ENCODE measurements at regions of chr3 and their contacts with region 1.

Region 1: GRCh38 chr3:139389458-139390209 is at the start of gene COPB2:
- DNase-seq: peak; percentile 98
- ATAC-seq: peak; percentile 97
- H3K4me3 ChIP-seq: peak within 1 kb of the TSS; percentile 73 to 96 (median 79)
- H3K4me3 Mint-ChIP-seq: peak within 1 kb of the TSS; percentile 96
- H3K27ac ChIP-seq: peak within 1 kb of the TSS; percentile 86 to 94
- H3K27ac Mint-ChIP-seq: peak within 1 kb of the TSS; percentile 95
- H3K4me1 ChIP-seq: peaks cover 16 to 21% of the 10 kb centered on the region in 2 donors
- H3K4me1 Mint-ChIP-seq: peaks cover 39% of the 10 kb centered on the region
- H3K27me3 ChIP-seq: no peaks in the 10 kb centered on the region
- H3K27me3 Mint-ChIP-seq: no peaks in the 10 kb centered on the region
- CTCF ChIP-seq: no peak
- total RNA-seq, gene COPB2: 75.4 and 81.7 TPM in 2 replicates

Region 2: GRCh38 chr3:138174421-138175122 is 1215.1 kb before region 1 on chr3 and contains the start of gene DBR1:
- CTCF ChIA-PET with region 1: no interaction called
- POLR2A ChIA-PET with region 1: no interaction called
- intact Hi-C with region 1: loop called (anchors 5 kb)
- DNase-seq: peak; percentile 88
- ATAC-seq: peak; percentile 93
- H3K4me3 ChIP-seq: peak within 1 kb of the TSS; percentile 75 to 95 (median 81)
- H3K4me3 Mint-ChIP-seq: peak within 1 kb of the TSS; percentile 100
- H3K27ac ChIP-seq: peak within 1 kb of the TSS; percentile 77
- H3K27ac Mint-ChIP-seq: peak within 1 kb of the TSS; percentile 99
- H3K4me1 ChIP-seq: peaks cover 14 to 16% of the 10 kb centered on the region in 2 donors
- H3K4me1 Mint-ChIP-seq: peaks cover 30% of the 10 kb centered on the region
- H3K27me3 ChIP-seq: no peaks in the 10 kb centered on the region
- H3K27me3 Mint-ChIP-seq: peaks cover 3% of the 10 kb centered on the region
- CTCF ChIP-seq: no peak
- total RNA-seq, gene DBR1: 22.6 and 27.6 TPM in 2 replicates

Region 3: GRCh38 chr3:139343895-139344856 is 45.5 kb before region 1 on chr3 and contains the start of gene MRPS22:
- CTCF ChIA-PET with region 1: interaction called, 6 read pairs
- POLR2A ChIA-PET with region 1: interaction called, 5 read pairs
- intact Hi-C with region 1: loop called (anchors 1 kb)
- DNase-seq: peak; percentile 86
- ATAC-seq: peak; percentile 98
- H3K4me3 ChIP-seq: peak within 1 kb of the TSS; percentile 57 to 95 (median 88)
- H3K4me3 Mint-ChIP-seq: no peak within 1 kb of the TSS
- H3K27ac ChIP-seq: peak within 1 kb of the TSS; percentile 51 to 83
- H3K27ac Mint-ChIP-seq: peak within 1 kb of the TSS; percentile 66
- H3K4me1 ChIP-seq: peaks cover 10 to 14% of the 10 kb centered on the region in 2 donors
- H3K4me1 Mint-ChIP-seq: peaks cover 8% of the 10 kb centered on the region
- H3K27me3 ChIP-seq: peaks cover 0 to 13% (median 3%) of the 10 kb centered on the region in 4 experiments
- H3K27me3 Mint-ChIP-seq: peaks cover 17% of the 10 kb centered on the region
- CTCF ChIP-seq: no peak
- total RNA-seq, gene MRPS22: 32.5 and 38.9 TPM in 2 replicates

Region 4: DNA sequence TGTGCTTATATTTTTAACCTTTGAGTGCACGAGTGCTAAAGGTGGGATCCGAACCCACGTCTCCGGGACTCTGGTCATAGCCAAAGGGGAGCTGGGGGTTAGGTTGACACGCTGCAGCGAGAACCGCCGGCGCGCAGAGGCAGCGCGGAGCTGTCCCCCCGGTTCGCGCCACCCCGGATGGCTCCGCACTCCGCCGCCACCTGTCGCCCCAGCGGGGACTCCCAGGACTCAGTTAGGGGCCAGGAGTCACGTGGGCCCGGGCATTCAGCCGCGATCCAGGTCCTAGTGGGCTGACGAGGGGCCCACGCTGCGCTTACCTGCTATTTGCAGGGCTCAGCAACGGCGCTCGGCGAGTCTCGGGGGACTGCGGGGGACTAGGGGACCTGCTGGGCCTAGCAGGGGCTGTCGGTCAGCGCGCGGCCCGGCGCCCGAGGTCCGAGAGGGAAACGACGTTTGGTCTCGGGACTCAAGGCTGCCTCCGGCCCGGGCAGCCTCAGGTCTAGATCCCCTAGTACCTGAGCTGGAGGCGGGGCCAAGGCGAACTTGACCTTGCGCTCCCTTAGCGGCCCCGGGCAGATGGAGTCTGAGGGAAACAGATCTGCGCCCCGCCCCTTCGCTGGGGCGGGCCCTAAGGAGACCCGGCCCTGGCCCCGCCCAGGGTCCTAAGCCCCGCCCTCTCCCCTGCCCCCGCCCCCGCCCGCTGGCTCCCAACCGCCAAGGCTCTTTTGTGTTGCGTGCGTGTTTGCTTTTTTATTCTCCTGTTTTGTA is 287.9 kb after region 1 on chr3 and contains the start of gene NMNAT3:
- CTCF ChIA-PET with region 1: no interaction called
- POLR2A ChIA-PET with region 1: no interaction called
- intact Hi-C with region 1: loop called (anchors 5 kb)
- DNase-seq: peak; percentile 87
- ATAC-seq: peak; percentile 99
- H3K4me3 ChIP-seq: peak within 1 kb of the TSS; percentile 5 to 85 (median 80)
- H3K4me3 Mint-ChIP-seq: peak within 1 kb of the TSS; percentile 85
- H3K27ac ChIP-seq: peak within 1 kb of the TSS; percentile 69 to 92
- H3K27ac Mint-ChIP-seq: no peak within 1 kb of the TSS
- H3K4me1 ChIP-seq: peaks cover 4 to 12% of the 10 kb centered on the region in 2 donors
- H3K4me1 Mint-ChIP-seq: peaks cover 9% of the 10 kb centered on the region
- H3K27me3 ChIP-seq: peaks cover 0 to 5% (median 2%) of the 10 kb centered on the region in 4 experiments
- H3K27me3 Mint-ChIP-seq: peaks cover 17% of the 10 kb centered on the region
- CTCF ChIP-seq: no peak
- total RNA-seq, gene NMNAT3: 2.7 and 3.3 TPM in 2 replicates

Region 5: GRCh38 chr3:140941434-140942220 is 1552.0 kb after region 1 on chr3 and contains the start of gene SLC25A36:
- CTCF ChIA-PET with region 1: no interaction called
- POLR2A ChIA-PET with region 1: no interaction called
- intact Hi-C with region 1: loop called (anchors 1 kb)
- DNase-seq: peak; percentile 99
- ATAC-seq: peak; percentile 96
- H3K4me3 ChIP-seq: peak within 1 kb of the TSS; percentile 63 to 86 (median 80)
- H3K4me3 Mint-ChIP-seq: peak within 1 kb of the TSS; percentile 95
- H3K27ac ChIP-seq: peak within 1 kb of the TSS; percentile 91 to 95
- H3K27ac Mint-ChIP-seq: peak within 1 kb of the TSS; percentile 97
- H3K4me1 ChIP-seq: peaks cover 11 to 26% of the 10 kb centered on the region in 2 donors
- H3K4me1 Mint-ChIP-seq: peaks cover 42% of the 10 kb centered on the region
- H3K27me3 ChIP-seq: no peaks in the 10 kb centered on the region
- H3K27me3 Mint-ChIP-seq: no peaks in the 10 kb centered on the region
- CTCF ChIP-seq: no peak
- total RNA-seq, gene SLC25A36: 76.0 and 86.3 TPM in 2 replicates